HepG2 (cell line): ENCODE measurements at regions of chr4 and their contacts with region 1.

Region 1: GRCh38 chr4:83639849-83640493 is 104.1 kb downstream of the GPAT3 start:
- DNase-seq: peak; percentile 71
- ATAC-seq: peak; percentile 85
- H3K4me3 ChIP-seq: no peak overlapping the region
- H3K27ac ChIP-seq: no peak overlapping the region
- H3K4me1 ChIP-seq: no peaks in the 10 kb centered on the region
- H3K27me3 ChIP-seq: no peaks in the 10 kb centered on the region; a peak in 1 of 5 replicates
- CTCF ChIP-seq: peak; percentile 87
- EP300 ChIP-seq: no peak
- POLR2A ChIP-seq: no peak
- RAD21 ChIP-seq: peak; percentile 82

Region 2: GRCh38 chr4:83362492-83363329 is 277.3 kb before region 1 on chr4:
- CTCF ChIA-PET with region 1: no interaction called
- POLR2A ChIA-PET with region 1: no interaction called
- in situ Hi-C with region 1: loop called (anchors 25 kb)
- intact Hi-C with region 1: loop called (anchors 2 kb)
- DNase-seq: peak; percentile 96
- ATAC-seq: peak; percentile 89
- H3K4me3 ChIP-seq: peak overlapping the region; percentile 27 to 53 (median 33); a peak in 5 of 6 replicates
- H3K27ac ChIP-seq: peak overlapping the region; percentile 85
- H3K4me1 ChIP-seq: peaks cover 54% of the 10 kb centered on the region
- H3K27me3 ChIP-seq: no peaks in the 10 kb centered on the region
- CTCF ChIP-seq: peak; percentile 69
- EP300 ChIP-seq: peak in 1 of 2 experiments; percentile 73; a peak in 2 of 4 replicates
- POLR2A ChIP-seq: peak in 1 of 2 experiments; percentile 75; a peak in 2 of 4 replicates
- RAD21 ChIP-seq: peak; percentile 15; the same call in 1 of the 2 replicates

Region 3: DNA sequence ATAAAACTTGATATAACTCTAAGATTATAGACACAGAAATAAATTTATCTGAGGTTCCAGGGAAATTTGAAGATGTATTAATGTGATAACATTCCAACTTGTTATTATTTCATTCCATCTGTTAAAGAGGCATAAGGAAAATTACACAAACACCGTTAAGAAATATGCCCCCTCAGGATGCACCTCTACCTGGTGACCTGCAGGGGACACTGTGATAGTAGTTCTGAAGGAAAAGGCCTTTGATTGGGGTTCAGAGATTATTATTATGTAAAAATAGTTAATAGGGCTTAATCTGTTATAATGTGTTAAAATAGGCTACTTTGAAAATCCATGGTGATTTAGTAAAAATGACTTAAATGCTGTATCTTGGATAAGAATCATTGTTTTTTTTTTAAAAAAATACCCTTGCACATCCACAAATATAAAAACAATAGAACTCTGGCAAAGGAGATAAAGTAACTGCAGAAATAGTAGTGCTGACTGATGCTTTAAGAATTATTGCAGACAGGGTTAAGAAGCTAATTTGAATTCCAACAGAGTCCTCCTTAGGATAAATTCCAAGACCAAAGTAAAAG is 149.0 kb before region 1 on chr4:
- CTCF ChIA-PET with region 1: interaction called, 14 read pairs
- POLR2A ChIA-PET with region 1: no interaction called
- in situ Hi-C with region 1: no loop called
- intact Hi-C with region 1: loop called (anchors 1 kb)
- DNase-seq: peak; percentile 34
- ATAC-seq: no peak
- H3K4me3 ChIP-seq: no peak overlapping the region
- H3K27ac ChIP-seq: no peak overlapping the region
- H3K4me1 ChIP-seq: peaks cover 23% of the 10 kb centered on the region
- H3K27me3 ChIP-seq: no peaks in the 10 kb centered on the region
- CTCF ChIP-seq: peak; percentile 59
- EP300 ChIP-seq: no peak
- POLR2A ChIP-seq: no peak
- RAD21 ChIP-seq: no peak

Region 4: DNA sequence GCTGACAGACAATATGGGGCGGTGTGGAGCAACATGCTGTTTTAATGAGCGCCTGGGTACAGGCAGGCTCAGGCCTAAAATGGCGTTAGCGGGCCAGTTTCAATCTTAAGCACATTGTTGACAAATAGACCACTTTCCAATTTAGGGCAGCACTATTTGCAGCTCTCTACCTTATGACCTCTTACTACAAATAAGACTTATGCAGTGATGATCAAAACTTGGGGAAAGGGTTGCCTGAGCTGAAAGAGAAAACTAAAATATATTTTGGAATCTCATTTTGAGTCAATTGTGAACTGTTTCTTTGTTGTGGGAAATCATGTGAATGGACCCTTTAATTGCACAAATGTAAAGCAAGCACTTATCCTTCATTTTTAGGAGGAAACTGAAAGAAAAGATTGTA is 129.5 kb before region 1 on chr4:
- CTCF ChIA-PET with region 1: interaction called, 51 read pairs
- POLR2A ChIA-PET with region 1: no interaction called
- in situ Hi-C with region 1: loop called (anchors 5 kb)
- intact Hi-C with region 1: loop called (anchors 1 kb)
- DNase-seq: no peak
- ATAC-seq: no peak
- H3K4me3 ChIP-seq: no peak overlapping the region
- H3K27ac ChIP-seq: no peak overlapping the region
- H3K4me1 ChIP-seq: no peaks in the 10 kb centered on the region
- H3K27me3 ChIP-seq: peaks cover 0 to 5% of the 10 kb centered on the region in 2 experiments; a peak in 2 of 5 replicates
- CTCF ChIP-seq: no peak
- EP300 ChIP-seq: no peak
- POLR2A ChIP-seq: no peak
- RAD21 ChIP-seq: no peak

Region 5: DNA sequence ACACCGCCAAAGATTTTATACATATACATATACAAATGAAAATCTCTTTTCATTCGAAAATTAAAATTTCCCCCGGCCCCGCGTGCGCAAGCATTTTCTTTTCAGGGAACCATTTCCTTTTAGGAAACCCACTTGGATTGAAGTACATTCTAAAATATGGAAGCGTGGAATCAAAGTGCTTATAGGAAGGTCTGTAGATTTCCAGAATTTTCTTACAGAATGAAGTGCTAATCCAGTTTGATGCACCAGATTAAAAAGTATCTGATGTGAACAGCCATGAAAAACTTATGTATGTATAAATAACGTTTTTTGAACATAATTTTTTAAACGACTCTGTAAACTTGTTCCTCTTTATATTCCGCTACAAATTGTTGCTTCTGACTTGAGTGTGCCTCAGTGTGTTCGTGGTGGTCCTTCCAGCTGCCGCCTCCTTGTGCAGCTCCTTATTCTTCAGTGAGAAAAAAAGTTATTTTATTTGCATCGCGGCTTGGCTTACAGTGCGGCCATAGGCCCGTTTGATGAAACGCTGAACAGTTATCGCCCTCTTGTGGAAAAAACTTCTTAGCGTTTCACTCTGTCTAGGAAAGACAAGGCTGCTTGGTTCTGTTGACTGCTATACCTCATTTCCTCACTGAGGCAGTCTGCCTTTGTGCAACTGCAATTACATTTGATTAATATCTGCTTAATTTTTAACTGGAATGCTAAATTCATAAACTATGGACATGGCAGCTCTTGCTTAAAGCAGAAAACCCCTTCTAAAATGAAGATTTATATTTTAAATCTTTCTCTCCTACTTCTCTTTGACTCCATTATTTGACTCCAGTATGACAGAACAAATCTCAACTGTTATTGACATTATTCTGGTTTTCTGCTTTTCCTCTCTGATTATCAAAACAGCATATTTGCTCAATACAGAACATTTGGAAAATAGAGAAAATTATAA is 863.8 kb after region 1 on chr4:
- CTCF ChIA-PET with region 1: interaction called, 10 read pairs
- POLR2A ChIA-PET with region 1: no interaction called
- in situ Hi-C with region 1: no loop called
- intact Hi-C with region 1: loop called (anchors 2 kb)
- DNase-seq: peak; percentile 46
- ATAC-seq: peak; percentile 98
- H3K4me3 ChIP-seq: no peak overlapping the region
- H3K27ac ChIP-seq: no peak overlapping the region
- H3K4me1 ChIP-seq: 0 out of 2 replicates have a peak, but pooled peaks cover 2% of the 10 kb centered on the region
- H3K27me3 ChIP-seq: peaks cover 4 to 50% of the 10 kb centered on the region in 2 experiments; a peak in 4 of 5 replicates
- CTCF ChIP-seq: peak; percentile 82
- EP300 ChIP-seq: no peak
- POLR2A ChIP-seq: no peak
- RAD21 ChIP-seq: peak; percentile 47; the same call in 1 of the 2 replicates